Activated T-helper 1 cell treated with anti-CD3 and anti-CD28 coated beads, Interleukin-12 subunit alpha, Interleukin-12 subunit beta, Interleukin-2, Interleukin-4 antibody, amounts not matched to agents 30 ng/mL and 10 ng/mL and 1 ng/mL, durations not matched to agents 14 hours and 24 hours and 36 hours (primary cell): ENCODE measurements at regions of chr14 and their contacts with region 1.

Region 1: DNA sequence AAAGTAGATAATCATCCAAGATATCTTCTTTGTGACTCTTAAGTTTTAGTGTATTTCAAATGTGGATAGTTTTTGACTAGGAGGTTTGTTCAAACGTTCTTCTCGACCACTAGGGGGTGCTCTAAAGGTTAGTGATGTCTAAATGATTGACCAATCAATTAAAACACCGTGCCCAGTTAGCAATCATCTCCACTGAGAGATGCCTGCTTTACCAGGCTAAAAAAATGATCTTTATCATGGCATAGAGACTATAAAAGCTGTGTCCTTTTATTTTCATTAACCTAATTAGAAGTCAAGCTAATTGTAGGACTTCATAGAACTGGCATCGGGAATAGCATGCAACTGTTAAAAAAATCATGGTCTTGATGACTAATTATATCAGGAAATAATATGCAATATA is 153.9 kb downstream of the PRKCH start:
- DNase-seq: no peak
- H3K4me3 Mint-ChIP-seq: peak overlapping the region; percentile 39
- H3K27ac Mint-ChIP-seq: peak overlapping the region; percentile 83
- H3K4me1 Mint-ChIP-seq: peaks cover 96% of the 10 kb centered on the region
- H3K27me3 Mint-ChIP-seq: no peaks in the 10 kb centered on the region

Region 2: DNA sequence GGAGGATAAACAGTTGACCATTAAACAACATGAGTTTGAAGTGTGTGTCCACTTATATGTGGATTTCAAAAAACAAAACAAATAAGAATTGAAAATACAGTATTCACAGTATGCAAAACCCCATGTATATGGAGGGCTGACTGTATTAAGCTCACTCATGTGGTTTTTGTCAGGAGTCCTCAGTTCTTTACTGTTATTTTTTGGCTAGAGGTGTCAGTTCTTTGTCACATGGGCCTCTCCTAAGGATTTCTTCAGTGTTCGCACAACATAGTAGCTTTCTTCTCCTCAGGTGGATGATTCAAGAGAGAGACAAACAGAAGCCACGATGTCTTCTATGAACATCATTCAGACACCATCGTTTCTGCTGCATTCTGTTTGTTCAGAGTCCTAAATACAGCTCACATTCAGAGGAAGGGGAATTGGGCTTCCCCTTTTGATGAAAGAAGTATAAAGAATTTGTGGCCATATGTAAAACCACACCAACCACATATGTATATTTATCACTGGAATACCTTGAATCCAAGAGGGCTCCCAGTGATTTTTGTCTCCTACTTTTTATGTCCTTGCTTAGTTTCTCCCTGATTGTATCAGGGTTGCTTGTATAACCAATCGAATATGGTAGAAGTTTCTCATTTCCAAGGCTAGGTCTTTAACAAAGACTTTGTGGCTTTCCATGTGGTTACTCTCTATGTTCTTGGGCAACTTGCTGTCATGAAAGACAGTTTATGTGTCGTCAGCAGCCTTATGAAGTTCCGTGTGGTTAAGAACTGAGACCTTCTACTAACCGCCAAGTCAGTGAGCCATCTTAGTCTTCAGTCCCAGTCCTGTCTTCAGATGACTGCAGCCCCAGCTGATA is 721.8 kb before region 1 on chr14:
- intact Hi-C with region 1: loop called (anchors 1 kb)
- DNase-seq: peak; percentile 66
- H3K4me3 Mint-ChIP-seq: peak overlapping the region; percentile 66
- H3K27ac Mint-ChIP-seq: peak overlapping the region; percentile 90
- H3K4me1 Mint-ChIP-seq: peaks cover 53% of the 10 kb centered on the region
- H3K27me3 Mint-ChIP-seq: peaks cover 5% of the 10 kb centered on the region

Region 3: DNA sequence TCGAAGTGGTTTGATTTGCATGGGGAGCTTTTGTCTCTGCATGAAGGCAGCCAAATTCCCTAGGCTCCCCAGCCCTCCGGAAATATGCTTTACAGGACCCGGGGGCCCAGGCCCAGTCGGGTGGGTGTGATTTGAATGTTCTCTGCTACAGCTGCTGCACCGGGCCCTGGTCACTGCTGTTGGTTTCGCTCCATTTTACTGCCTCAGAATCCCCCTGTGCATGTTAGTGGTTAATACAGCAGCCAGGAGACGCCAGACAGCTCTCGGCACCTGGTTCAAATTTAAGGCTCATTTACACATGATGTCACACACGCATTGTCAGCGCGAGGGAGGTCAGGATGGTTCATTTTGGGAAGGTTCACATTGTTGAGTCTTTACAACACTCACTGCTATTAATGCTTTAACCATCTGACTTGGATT is 394.7 kb before region 1 on chr14:
- intact Hi-C with region 1: no loop called
- DNase-seq: no peak
- H3K4me3 Mint-ChIP-seq: no peak overlapping the region
- H3K27ac Mint-ChIP-seq: no peak overlapping the region
- H3K4me1 Mint-ChIP-seq: no peaks in the 10 kb centered on the region
- H3K27me3 Mint-ChIP-seq: no peaks in the 10 kb centered on the region

Region 4: GRCh38 chr14:61438860-61439684 is 36.2 kb before region 1 on chr14:
- intact Hi-C with region 1: no loop called
- DNase-seq: no peak
- H3K4me3 Mint-ChIP-seq: peak overlapping the region; percentile 78
- H3K27ac Mint-ChIP-seq: peak overlapping the region; percentile 83
- H3K4me1 Mint-ChIP-seq: peaks cover 80% of the 10 kb centered on the region
- H3K27me3 Mint-ChIP-seq: no peaks in the 10 kb centered on the region

Region 5: GRCh38 chr14:61456720-61457119 is 18.6 kb before region 1 on chr14:
- intact Hi-C with region 1: loop called (anchors 1 kb)
- DNase-seq: peak; percentile 69
- H3K4me3 Mint-ChIP-seq: no peak overlapping the region
- H3K27ac Mint-ChIP-seq: peak overlapping the region; percentile 71
- H3K4me1 Mint-ChIP-seq: peaks cover 71% of the 10 kb centered on the region
- H3K27me3 Mint-ChIP-seq: no peaks in the 10 kb centered on the region

Region 6: GRCh38 chr14:61503167-61503801 is 28.0 kb after region 1 on chr14:
- intact Hi-C with region 1: loop called (anchors 1 kb)
- DNase-seq: peak; percentile 51
- H3K4me3 Mint-ChIP-seq: peak overlapping the region; percentile 76
- H3K27ac Mint-ChIP-seq: peak overlapping the region; percentile 99
- H3K4me1 Mint-ChIP-seq: peaks cover 94% of the 10 kb centered on the region
- H3K27me3 Mint-ChIP-seq: no peaks in the 10 kb centered on the region

Region 7: GRCh38 chr14:61568572-61569131 is 93.3 kb after region 1 on chr14:
- intact Hi-C with region 1: loop called (anchors 10 kb)
- DNase-seq: peak; percentile 55
- H3K4me3 Mint-ChIP-seq: peak overlapping the region; percentile 75
- H3K27ac Mint-ChIP-seq: peak overlapping the region; percentile 66
- H3K4me1 Mint-ChIP-seq: peaks cover 94% of the 10 kb centered on the region
- H3K27me3 Mint-ChIP-seq: no peaks in the 10 kb centered on the region

Region 8: GRCh38 chr14:61671082-61671481 is 195.8 kb after region 1 on chr14:
- intact Hi-C with region 1: loop called (anchors 1 kb)
- DNase-seq: peak; percentile 42
- H3K4me3 Mint-ChIP-seq: no peak overlapping the region
- H3K27ac Mint-ChIP-seq: no peak overlapping the region
- H3K4me1 Mint-ChIP-seq: peaks cover 9% of the 10 kb centered on the region
- H3K27me3 Mint-ChIP-seq: no peaks in the 10 kb centered on the region

Region 9: GRCh38 chr14:61750708-61751474 is 275.6 kb after region 1 on chr14:
- intact Hi-C with region 1: loop called (anchors 2 kb)
- DNase-seq: peak; percentile 85
- H3K4me3 Mint-ChIP-seq: peak overlapping the region; percentile 95
- H3K27ac Mint-ChIP-seq: peak overlapping the region; percentile 94
- H3K4me1 Mint-ChIP-seq: peaks cover 57% of the 10 kb centered on the region
- H3K27me3 Mint-ChIP-seq: no peaks in the 10 kb centered on the region